Calu3 (cell line): ENCODE measurements at regions of chr1 and their contacts with region 1.

Region 1: DNA sequence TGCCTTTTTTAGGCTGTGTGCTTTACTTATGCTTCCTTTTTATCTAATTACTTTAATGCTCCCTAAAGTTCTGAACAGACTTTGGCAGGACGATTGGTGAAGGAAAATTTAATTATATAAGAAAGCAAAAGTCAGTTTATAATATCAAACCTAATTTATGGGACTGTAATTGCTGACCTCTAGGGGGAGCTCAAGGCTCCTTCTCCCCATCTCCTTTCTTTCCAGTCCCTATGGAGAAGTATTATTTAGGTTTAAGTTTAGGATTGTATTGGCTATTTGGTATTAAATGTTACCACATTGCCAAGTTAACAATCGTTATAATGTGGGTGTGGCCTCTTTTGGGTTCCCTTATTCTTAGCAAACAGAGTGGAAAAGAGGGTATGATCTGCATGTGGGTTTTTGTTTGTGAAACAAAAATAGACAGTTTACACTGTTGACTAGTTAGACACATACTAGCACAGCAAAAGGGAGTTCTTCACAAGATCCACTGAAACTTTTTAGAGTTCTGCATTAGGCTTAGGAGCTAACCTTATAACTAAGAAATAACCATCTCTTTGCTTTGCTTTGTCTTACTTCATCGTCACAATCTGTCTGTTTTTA is 48.2 kb upstream of the TNFSF4 start:
- DNase-seq: peak; percentile 45
- H3K4me3 Mint-ChIP-seq: no peak overlapping the region
- H3K27ac Mint-ChIP-seq: no peak overlapping the region
- H3K4me1 Mint-ChIP-seq: no peaks in the 10 kb centered on the region
- H3K27me3 Mint-ChIP-seq: no peaks in the 10 kb centered on the region
- CTCF ChIP-seq: no peak

Region 2: DNA sequence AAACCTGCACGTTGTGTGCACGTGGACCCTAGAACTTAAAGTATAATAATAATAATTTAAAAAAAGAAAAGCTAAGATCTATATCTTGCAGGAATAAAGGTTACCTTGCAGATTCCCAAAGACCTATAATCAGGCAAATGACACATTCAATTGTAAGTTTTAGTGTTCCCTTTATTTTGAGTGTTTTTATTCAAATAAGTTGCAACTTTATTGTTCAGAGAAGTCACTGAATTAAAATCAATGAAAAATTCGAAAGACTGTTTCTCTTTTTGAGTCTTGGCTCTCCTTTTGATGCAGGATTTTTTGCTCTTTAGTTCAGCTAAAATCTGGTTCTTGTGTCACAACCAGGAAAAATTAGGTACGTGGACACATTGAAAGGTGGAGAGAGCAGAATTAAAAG is 20.4 kb before region 1 on chr1:
- CTCF ChIA-PET with region 1: no interaction called
- intact Hi-C with region 1: no loop called
- DNase-seq: no peak
- H3K4me3 Mint-ChIP-seq: no peak overlapping the region
- H3K27ac Mint-ChIP-seq: no peak overlapping the region
- H3K4me1 Mint-ChIP-seq: no peaks in the 10 kb centered on the region
- H3K27me3 Mint-ChIP-seq: peaks cover 3% of the 10 kb centered on the region
- CTCF ChIP-seq: no peak

Region 3: DNA sequence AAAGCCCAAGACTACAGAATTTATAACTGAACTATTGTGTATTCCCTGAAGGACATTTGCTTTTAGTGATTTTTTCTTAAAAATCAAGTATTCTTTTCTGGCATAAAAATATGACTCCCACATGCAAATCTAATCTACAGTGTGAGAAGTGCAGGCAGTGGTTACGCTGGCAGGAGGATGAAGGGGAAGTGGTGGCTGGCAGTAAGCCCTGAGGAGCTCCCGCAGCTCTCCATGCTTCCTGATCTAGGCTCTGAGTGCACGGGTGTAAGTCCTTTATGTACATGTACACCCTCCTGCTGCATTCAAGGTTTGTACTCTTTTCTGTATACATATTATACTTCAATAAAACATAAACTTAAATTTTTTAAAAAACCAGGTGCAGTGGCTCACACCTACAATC is 154.3 kb after region 1 on chr1:
- CTCF ChIA-PET with region 1: no interaction called
- intact Hi-C with region 1: loop called (anchors 5 kb)
- DNase-seq: no peak
- H3K4me3 Mint-ChIP-seq: no peak overlapping the region
- H3K27ac Mint-ChIP-seq: no peak overlapping the region
- H3K4me1 Mint-ChIP-seq: peaks cover 24% of the 10 kb centered on the region
- H3K27me3 Mint-ChIP-seq: no peaks in the 10 kb centered on the region
- CTCF ChIP-seq: no peak